BJ (cell line): ENCODE measurements at regions of chr9 and their contacts with region 1.

Region 1: DNA sequence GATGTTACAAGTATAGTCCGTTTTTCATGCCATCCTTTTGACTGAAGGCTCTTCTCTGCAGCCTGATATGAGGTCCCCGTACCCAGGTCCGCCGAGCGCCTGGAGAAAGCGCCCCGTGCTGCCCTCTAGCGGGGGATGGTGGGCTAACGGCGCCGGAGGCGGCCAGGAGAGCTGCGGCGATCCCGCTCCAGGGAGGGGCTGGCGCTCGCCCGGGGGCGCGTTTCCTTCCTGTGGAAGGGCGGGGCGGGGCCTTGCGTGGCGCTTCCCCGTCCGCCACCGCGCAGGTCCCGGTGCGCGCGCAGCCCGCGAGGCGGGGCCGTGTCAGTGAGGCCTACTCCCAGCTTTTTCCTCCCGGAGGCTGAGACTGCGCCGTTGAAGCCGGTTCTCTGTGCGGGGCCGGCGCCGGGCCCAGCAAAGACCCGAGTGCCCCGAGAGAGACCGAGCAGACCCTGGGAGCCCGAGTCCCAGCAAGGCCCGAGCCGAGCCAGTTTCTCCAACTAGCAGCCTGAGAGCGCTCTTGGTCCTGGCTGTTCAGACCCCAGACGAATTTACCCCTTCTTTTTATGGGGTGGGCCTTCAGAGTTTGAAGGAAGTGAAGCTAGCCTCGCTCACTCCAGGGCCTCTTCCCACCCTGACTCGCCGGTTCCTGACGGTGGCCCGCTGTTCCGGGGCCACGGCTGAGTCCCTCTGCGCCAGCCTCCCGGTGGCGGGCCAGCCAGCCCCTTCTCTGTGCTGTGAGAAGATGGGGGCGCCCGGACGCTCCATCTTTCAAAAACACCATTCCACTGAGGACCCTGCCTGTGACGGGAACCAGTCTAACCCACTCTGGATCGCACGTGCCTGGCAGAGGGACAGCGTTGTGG is 9.7 kb upstream of the PHF2 start:
- DNase-seq: peak; percentile 75
- H3K4me3 ChIP-seq: peak overlapping the region; percentile 54
- H3K27me3 ChIP-seq: no peaks in the 10 kb centered on the region
- CTCF ChIP-seq: peak; percentile 93

Region 2: DNA sequence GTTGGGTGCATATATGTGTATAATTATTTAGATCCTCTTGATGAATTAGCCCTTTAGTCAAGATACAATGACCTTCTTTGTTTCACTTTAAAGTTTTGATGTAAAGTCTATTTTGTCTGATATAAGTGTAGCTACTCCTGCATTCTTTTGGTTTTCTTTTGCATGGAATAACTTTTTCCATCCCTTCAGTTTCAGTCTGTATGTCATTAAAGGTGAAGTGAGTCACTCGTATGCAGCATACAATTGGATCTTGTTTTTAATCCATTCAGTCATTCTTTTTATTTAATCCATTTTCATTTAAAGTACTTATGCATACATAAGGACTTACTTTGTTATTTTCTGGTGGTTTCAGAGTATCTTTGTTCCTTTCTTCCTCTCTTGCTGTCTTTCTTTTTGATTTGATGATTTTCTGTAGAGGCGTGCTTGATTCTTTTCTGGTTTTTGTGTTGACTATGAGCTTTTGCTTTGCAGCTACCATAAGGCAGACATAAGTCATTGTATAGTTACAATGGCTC is 151.4 kb before region 1 on chr9:
- CTCF ChIA-PET with region 1: no interaction called
- POLR2A ChIA-PET with region 1: no interaction called
- DNase-seq: no peak
- H3K4me3 ChIP-seq: no peak overlapping the region
- H3K27me3 ChIP-seq: no peaks in the 10 kb centered on the region
- CTCF ChIP-seq: no peak

Region 3: DNA sequence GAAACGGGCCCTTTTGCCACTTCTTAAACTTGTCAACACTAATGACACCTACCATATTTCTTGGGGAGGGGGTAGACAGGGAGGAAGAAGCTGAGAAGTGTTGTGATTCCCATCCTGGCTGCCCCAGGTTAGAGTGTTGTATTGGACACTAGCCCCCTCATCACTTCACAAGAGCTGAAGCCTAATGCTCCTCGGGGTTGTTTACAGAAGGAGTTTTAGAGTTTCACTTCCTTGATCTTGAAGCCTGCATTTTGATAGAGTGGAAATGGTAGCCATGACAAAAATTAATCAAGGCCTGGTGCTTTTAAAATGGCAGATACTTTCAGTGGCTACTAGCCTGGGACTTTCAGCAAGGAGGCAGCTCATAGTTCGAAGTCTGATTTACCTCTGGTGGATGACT is 102.2 kb before region 1 on chr9:
- CTCF ChIA-PET with region 1: interaction called, 10 read pairs
- POLR2A ChIA-PET with region 1: no interaction called
- DNase-seq: no peak
- H3K4me3 ChIP-seq: no peak overlapping the region
- H3K27me3 ChIP-seq: no peaks in the 10 kb centered on the region
- CTCF ChIP-seq: no peak

Region 4: DNA sequence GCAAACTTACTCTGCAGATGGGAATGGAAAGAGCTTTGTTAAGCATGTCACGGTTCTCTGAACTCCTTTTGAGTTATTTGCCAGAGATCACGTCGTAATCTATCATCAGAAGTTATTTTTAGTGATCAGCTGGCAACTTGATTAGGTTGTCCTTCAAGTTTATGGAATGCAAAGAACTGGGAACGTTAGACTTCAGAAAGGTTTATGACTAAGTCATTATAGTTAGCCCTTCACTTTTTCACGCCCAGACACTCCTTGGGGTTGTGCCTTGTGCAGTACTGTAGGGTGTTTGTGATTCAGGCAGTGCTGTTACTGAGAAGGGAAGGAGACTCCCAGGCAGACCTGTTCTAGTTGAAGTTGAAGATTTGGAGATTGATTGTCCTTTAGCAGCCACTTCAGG is 17.0 kb before region 1 on chr9:
- CTCF ChIA-PET with region 1: interaction called, 12 read pairs
- POLR2A ChIA-PET with region 1: no interaction called
- DNase-seq: no peak
- H3K4me3 ChIP-seq: no peak overlapping the region
- H3K27me3 ChIP-seq: no peaks in the 10 kb centered on the region
- CTCF ChIP-seq: no peak

Region 5: GRCh38 chr9:93908591-93909511 is 342.2 kb after region 1 on chr9:
- CTCF ChIA-PET with region 1: no interaction called
- POLR2A ChIA-PET with region 1: no interaction called
- DNase-seq: no peak
- H3K4me3 ChIP-seq: no peak overlapping the region
- H3K27me3 ChIP-seq: no peaks in the 10 kb centered on the region
- CTCF ChIP-seq: no peak